ENCODE measurements at regions of chr2 and their contacts with region 1.

Region 1: DNA sequence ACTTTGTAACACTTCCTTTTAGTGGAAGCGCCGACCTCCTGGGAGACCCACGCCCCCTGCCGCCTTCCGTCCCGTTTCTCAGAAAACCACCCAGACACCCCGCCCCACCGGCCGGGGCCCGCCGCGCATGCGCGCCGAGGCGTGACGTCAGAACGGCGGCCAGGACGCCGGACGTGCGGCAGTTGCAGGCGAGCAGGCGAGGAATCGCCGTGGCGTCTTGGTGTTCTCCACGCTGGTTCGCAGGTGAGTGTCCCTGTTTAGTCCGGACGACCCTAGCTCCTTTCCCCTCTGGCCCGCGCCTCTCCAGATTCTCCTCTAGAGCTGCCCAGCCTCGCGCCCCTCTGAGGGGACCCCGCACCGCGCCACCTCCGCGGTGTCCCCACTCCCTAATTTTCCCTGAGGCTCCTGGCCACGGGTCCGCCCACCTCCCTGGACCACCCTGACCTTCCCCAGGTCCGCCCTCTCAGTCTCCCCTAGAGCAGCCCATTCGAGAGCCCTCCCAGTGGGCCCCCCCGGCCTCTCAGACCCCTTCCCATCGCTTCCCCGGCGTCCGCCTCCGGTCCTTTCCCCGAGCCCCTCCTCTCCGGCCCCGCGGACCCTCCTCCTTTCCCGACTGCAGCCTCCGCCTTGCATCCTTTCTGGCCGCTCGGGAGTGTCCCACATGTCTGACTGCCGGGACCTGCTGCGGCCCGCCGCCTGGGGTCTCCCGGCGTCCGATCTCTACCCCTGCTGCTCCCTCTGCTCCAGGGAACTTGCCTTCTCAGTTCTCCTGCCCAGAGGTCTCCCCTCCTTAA is at the start of gene PLEKHB2:
- DNase-seq: peak; percentile 94
- H3K4me3 Mint-ChIP-seq: peak within 1 kb of the TSS; percentile 100
- H3K27ac Mint-ChIP-seq: peak within 1 kb of the TSS; percentile 98
- H3K4me1 Mint-ChIP-seq: peaks cover 46% of the 10 kb centered on the region
- H3K27me3 Mint-ChIP-seq: no peaks in the 10 kb centered on the region
- total RNA-seq, gene PLEKHB2: 72.3 and 72.9 TPM in 2 replicates

Region 2: DNA sequence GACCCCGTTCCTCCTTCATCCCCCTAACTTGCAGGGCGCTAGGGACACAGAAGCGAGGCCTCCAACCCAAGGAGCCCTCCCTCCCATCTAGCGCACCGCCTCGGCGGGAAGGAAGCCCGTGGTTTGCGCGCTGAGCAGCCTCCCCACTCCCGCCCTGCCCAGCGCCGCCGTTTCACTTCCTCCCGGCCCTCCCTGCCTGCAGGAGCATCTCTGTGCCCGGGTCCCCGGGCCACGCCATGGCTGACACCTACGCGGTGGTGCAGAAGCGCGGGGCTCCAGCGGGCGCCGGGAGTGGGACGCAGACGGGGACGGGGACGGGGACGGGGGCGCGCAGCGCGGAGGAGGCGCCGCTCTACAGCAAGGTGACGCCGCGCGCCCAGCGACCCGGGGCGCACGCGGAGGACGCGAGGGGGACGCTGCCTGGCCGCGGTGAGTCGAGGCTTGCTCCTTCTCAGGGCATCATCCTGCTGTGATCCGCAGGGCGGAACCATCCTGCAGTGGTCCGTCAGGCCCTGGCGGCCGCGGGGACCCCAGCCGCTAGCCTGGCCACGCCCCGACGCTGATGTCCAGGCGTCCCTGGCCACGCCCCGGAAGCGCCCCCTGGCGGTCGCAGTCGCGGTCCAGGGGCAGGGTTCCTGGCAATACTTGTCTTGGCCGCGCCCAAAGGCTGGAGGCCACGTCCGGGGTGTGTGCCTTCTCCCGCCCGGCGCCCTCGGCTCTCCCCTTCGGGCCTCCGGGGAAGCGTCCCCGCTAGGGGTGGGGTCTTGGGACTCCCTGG is 733.1 kb before region 1 on chr2:
- intact Hi-C with region 1: loop called (anchors 10 kb)
- DNase-seq: peak; percentile 69
- H3K4me3 Mint-ChIP-seq: peak overlapping the region; percentile 92
- H3K27ac Mint-ChIP-seq: peak overlapping the region; percentile 89
- H3K4me1 Mint-ChIP-seq: peaks cover 51% of the 10 kb centered on the region
- H3K27me3 Mint-ChIP-seq: peaks cover 1% of the 10 kb centered on the region

Region 3: GRCh38 chr2:130824492-130825061 is 280.8 kb before region 1 on chr2:
- intact Hi-C with region 1: loop called (anchors 10 kb)
- DNase-seq: peak; percentile 71
- H3K4me3 Mint-ChIP-seq: peak overlapping the region; percentile 43
- H3K27ac Mint-ChIP-seq: peak overlapping the region; percentile 87
- H3K4me1 Mint-ChIP-seq: peaks cover 29% of the 10 kb centered on the region
- H3K27me3 Mint-ChIP-seq: peaks cover 7% of the 10 kb centered on the region

Region 4: GRCh38 chr2:130951018-130951417 is 154.3 kb before region 1 on chr2:
- intact Hi-C with region 1: no loop called
- DNase-seq: no peak
- H3K4me3 Mint-ChIP-seq: no peak overlapping the region
- H3K27ac Mint-ChIP-seq: no peak overlapping the region
- H3K4me1 Mint-ChIP-seq: peaks cover 7% of the 10 kb centered on the region
- H3K27me3 Mint-ChIP-seq: peaks cover 2% of the 10 kb centered on the region

Region 5: DNA sequence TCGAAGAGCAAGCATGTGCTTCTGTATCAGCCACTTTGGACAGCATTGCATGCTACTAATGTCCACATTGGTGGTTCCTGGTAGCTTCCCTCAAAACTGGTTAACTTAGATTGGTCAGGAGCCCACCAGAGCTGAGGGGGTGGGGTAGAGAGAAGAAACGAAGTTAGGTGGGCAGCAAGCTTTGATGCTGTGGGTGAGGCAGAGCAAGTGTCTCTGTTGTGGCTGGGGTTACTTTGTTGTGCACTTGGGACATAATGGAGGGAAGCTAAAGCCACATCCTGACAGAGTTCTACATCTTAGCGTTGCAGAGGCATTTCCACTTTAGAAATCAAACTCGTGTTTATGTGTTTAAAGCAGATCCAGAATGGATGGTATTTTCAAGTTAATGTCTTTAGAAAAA is 94.8 kb before region 1 on chr2:
- intact Hi-C with region 1: no loop called
- DNase-seq: no peak
- H3K4me3 Mint-ChIP-seq: no peak overlapping the region
- H3K27ac Mint-ChIP-seq: no peak overlapping the region
- H3K4me1 Mint-ChIP-seq: peaks cover 25% of the 10 kb centered on the region
- H3K27me3 Mint-ChIP-seq: peaks cover 34% of the 10 kb centered on the region

Region 6: DNA sequence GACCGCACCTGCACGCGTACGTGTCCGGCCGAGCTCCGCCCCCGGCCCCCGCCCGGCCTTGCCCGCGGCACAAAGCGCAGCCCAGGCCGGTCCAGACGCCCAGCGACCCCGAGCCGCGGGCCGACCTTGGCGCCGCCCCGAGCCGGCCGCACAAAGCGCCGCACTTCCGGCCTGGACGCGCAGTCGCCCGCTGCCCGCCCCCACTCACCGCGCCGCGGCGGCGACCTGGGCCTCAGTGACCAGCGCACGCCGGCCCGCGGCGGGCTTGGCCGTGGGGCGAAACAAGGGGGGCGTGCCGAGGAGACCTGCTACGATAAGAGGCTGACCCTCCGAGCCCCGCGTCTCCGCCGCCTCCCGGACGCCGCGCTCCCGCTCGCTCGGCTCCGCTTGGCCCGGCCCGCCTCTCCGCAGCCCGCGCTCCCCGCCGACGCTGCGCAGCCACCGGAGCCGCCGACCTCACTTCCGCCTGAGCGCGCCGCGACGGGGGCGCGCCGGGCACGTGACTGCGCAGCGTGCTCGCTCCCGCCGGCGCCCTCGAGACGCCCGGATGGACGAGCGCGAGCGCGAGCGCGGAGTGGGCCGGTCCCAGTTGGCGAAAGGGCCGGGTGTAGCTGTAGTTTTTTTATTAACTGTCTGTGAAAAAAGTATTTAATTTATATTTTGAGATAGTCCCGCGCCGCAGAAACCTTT is 12.2 kb before region 1 on chr2 and contains the start of gene FAM168B:
- intact Hi-C with region 1: loop called (anchors 1 kb)
- DNase-seq: peak; percentile 87
- H3K4me3 Mint-ChIP-seq: peak within 1 kb of the TSS; percentile 90
- H3K27ac Mint-ChIP-seq: peak within 1 kb of the TSS; percentile 82
- H3K4me1 Mint-ChIP-seq: peaks cover 12% of the 10 kb centered on the region
- H3K27me3 Mint-ChIP-seq: no peaks in the 10 kb centered on the region
- total RNA-seq, gene FAM168B: 69.0 and 70.3 TPM in 2 replicates

Region 7: DNA sequence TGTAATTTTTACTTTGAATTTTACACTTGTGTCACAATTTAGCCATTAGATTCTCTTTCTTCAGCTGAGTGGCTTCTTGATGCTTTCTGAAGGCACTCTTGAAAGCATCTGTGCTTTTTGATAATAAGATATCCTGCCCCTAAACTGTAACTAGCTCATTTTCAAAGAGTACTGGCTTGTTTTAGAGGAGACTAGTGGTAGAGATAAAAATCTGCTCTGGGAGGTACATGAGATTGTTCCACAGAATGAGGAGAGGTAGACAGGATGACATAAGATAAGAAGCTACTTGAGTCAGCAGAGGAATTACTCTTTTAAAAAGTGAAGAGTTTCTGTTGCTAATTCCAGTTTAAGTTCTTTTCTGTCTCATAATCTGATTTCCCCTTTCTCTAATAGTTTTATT is 10.4 kb after region 1 on chr2:
- intact Hi-C with region 1: loop called (anchors 1 kb)
- DNase-seq: no peak
- H3K4me3 Mint-ChIP-seq: no peak overlapping the region
- H3K27ac Mint-ChIP-seq: peak overlapping the region; percentile 58
- H3K4me1 Mint-ChIP-seq: peaks cover 46% of the 10 kb centered on the region
- H3K27me3 Mint-ChIP-seq: no peaks in the 10 kb centered on the region

Region 8: DNA sequence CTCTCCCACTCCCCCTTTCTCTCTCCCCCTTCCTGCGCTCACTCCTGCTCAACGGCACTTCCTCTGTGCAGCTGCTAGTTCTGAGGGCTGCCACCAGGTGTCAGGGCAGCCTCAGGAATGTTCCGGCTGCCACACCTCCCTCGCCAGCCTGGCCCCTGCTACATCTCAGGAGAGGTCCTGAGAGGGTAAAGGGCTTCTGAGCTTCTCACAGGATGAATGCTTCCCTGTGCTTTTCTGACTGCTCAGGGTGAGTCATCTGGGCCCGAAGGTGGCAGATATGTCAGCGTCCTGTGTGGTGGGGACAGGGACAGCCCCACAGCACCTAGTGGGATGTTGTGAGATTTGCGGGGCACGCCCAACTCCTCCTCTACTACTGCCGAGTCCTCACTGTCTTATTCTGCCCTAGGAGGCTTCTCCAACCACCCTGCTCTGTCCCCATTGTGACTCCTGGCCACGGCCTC is 48.7 kb after region 1 on chr2:
- intact Hi-C with region 1: loop called (anchors 1 kb)
- DNase-seq: peak; percentile 50
- H3K4me3 Mint-ChIP-seq: no peak overlapping the region
- H3K27ac Mint-ChIP-seq: no peak overlapping the region
- H3K4me1 Mint-ChIP-seq: peaks cover 21% of the 10 kb centered on the region
- H3K27me3 Mint-ChIP-seq: peaks cover 5% of the 10 kb centered on the region

Region 9: DNA sequence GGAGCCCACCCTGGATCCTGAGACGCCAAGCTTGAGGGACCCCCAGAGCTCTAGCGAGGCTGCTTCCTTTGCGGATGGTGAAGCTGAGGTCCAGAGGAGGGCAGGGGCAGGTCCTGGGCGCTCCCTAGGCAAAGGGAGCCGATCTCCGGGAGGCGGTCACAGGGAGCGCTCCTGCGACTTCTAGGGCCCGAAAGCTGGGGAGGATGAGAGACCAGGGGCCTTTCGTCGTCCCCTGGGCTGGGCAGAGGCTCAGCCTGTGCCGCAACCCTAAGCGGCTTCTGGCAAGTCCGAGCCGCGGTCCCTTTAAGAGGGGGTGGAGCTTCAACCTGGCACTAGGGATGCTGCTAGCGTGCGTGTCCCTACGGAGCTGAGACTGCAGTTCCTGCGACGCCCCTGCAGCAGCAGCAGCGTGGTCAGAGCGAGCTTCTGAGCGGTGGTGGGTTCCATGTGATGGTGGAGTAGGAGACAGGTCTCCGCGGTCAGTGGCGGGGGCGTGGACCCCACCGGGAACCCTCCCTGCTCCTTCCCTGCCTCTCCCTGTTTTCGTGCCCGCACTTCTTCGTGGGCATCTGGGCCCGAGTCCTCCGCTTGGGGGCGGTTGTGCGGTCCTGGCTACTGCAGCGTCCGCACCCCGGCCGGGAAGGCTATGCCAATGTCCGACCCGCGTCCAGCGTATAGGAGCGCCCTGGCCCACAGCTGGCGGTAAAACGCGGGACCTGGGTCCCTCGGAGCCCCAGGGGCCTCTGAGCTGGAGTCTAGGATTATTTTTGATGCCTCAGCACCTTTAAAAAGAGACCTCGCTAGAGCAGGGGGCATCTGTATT is 577.0 kb after region 1 on chr2:
- intact Hi-C with region 1: loop called (anchors 5 kb)
- DNase-seq: peak; percentile 66
- H3K4me3 Mint-ChIP-seq: peak overlapping the region; percentile 86
- H3K27ac Mint-ChIP-seq: peak overlapping the region; percentile 47
- H3K4me1 Mint-ChIP-seq: peaks cover 30% of the 10 kb centered on the region
- H3K27me3 Mint-ChIP-seq: peaks cover 6% of the 10 kb centered on the region